Sigmoid colon (tissue), 7 donors: ENCODE measurements at regions of chr2 and their contacts with region 1.

Region 1: DNA sequence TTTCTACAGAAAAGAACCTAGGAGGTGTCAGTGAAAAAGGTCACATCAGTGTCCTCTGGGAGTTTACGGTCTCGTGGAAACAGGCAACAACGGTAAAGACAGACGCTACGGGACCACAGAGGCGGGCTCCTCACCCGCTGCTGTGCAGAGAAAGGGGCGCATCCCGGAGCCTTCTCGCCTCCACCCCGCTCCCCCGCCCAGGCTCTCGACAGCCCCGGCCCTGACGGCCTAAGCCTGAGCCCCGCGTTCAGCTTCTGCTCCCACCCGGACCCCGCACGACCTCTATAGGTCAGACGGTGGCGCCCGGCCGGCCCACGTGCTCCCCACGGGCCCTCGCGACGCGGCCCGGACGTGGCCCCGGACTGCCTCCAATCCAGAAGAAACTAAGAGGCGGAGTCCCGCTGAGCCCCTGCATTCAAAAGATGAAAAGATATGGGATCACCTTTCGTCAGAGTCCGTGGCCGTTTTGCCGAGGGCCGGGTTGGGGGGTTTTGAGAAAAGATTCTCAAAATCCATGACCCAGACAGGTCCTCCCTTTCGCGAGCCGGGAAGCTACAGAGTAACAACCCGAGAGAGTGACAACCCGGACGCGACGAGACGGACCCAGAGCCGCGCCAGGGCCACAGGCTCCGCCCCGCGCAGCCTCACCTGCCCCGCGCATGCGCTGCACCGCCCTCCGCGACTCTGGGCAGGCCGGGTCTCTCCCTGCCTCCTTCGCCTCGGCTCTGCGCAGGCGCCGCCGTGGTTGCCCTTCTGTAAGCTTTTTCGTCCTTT is at the start of gene ZC3H8:
- DNase-seq: peak; percentile 96
- H3K4me3 ChIP-seq: peak within 1 kb of the TSS; percentile 57 to 81 (median 66)
- H3K27ac ChIP-seq: peak within 1 kb of the TSS; percentile 80 to 85 (median 81)
- H3K4me1 ChIP-seq: peaks cover 0 to 15% (median 11%) of the 10 kb centered on the region in 4 donors
- H3K27me3 ChIP-seq: no peaks in the 10 kb centered on the region
- CTCF ChIP-seq: no peak
- EP300 ChIP-seq: no peak
- POLR2A ChIP-seq: peak; percentile 59 to 60
- total RNA-seq, gene ZC3H8: 2.7 to 22.2 (median 7.4) TPM

Region 2: DNA sequence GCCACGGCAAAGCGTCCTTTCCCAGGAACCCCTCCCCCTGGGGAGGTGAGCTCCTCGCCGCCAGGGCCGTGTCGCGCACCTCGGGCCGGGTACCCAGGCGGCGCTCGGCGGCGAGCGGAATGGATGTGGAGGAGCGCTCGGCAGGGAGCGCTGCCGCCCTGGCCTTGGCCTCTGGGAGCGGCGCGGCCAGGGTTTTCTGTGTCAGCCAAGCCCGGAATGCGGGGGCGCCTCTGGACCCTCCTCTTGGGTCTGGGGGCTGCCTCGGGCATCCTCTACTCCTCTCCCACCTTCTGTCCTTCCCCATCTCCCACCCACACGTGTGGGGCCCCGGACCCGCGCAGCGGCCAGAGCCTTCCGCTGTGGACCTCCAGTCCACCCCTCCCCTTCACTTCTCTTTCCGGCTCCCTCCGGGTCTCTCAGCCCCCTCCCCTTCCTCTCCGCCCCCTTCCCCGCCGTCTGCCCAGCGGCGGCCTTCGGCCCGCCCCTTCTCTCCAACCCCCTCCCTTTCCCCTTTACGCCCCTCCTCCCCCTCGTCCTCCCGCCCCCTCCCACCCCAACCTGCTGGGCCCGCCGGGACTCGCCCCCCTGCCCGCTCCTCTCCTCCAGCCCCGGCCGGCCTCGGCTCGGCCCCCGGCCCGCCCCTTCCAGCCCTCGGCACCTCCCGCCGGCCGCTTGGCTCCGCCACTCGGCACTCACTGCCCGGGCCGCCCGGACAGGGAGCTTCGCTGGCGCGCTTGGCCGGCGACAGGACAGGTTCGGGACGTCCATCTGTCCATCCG is 356.5 kb before region 1 on chr2 and contains the start of gene MERTK:
- intact Hi-C with region 1: loop called (anchors 10 kb)
- DNase-seq: peak; percentile 95
- H3K4me3 ChIP-seq: peak within 1 kb of the TSS; percentile 70 to 80 (median 75)
- H3K27ac ChIP-seq: peak within 1 kb of the TSS; percentile 80 to 90 (median 88)
- H3K4me1 ChIP-seq: peaks cover 0 to 37% (median 23%) of the 10 kb centered on the region in 4 donors
- H3K27me3 ChIP-seq: no peaks in the 10 kb centered on the region
- CTCF ChIP-seq: peak; percentile 43 to 49 (median 46)
- EP300 ChIP-seq: no peak
- POLR2A ChIP-seq: peak in 1 of 2 donors; percentile 42
- total RNA-seq, gene MERTK: 14.4 to 31.6 (median 26.0) TPM

Region 3: GRCh38 chr2:112138159-112138773 is 116.4 kb before region 1 on chr2 and contains the start of gene FBLN7:
- intact Hi-C with region 1: no loop called
- DNase-seq: no peak
- H3K4me3 ChIP-seq: peak within 1 kb of the TSS in 3 of 4 donors; percentile 48 to 55 (median 53)
- H3K27ac ChIP-seq: no peak within 1 kb of the TSS
- H3K4me1 ChIP-seq: peaks cover 0 to 13% (median 7%) of the 10 kb centered on the region in 4 donors
- H3K27me3 ChIP-seq: peaks cover 7 to 35% (median 11%) of the 10 kb centered on the region in 3 donors
- CTCF ChIP-seq: no peak
- EP300 ChIP-seq: no peak
- POLR2A ChIP-seq: no peak
- total RNA-seq, gene FBLN7: 0.95 to 1.7 (median 1.0) TPM

Region 4: GRCh38 chr2:112187805-112188596 is 66.7 kb before region 1 on chr2:
- intact Hi-C with region 1: no loop called
- DNase-seq: no peak
- H3K4me3 ChIP-seq: no peak overlapping the region
- H3K27ac ChIP-seq: no peak overlapping the region
- H3K4me1 ChIP-seq: no peaks in the 10 kb centered on the region
- H3K27me3 ChIP-seq: peaks cover 0 to under 1% (median 0%) of the 10 kb centered on the region in 3 donors
- CTCF ChIP-seq: no peak
- EP300 ChIP-seq: no peak
- POLR2A ChIP-seq: no peak

Region 5: DNA sequence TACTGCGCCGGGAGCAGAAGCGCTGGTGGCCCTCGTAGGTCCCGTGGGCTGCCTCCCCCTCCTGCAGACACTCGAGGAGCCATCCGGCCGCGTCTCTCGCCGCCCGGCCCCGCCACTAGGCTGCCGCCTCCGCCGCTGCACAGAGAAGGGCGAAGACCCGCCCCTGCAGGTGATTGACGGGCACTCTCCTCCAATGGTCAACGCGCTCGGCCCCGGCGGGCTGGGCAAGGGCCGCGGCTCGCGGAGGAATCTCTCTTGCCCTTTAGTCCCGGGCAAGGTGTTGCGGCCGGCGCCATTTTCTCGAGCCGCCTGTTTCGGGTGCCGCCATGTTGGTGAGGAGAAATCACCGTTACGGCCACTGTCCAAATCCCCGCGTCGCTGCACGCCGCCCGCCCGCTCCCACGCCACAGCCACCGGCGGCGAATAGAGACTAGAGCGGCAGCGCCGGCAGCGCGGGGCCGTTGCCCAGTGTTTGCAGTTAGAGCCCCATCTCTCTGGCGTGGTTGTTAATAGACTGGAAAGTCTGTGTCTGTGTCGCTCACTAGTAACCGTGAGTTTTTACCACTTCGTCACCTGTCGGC is 20.7 kb after region 1 on chr2 and contains the start of gene ZC3H6:
- intact Hi-C with region 1: loop called (anchors 1 kb)
- DNase-seq: peak; percentile 99
- H3K4me3 ChIP-seq: peak within 1 kb of the TSS; percentile 68 to 97 (median 89)
- H3K27ac ChIP-seq: peak within 1 kb of the TSS; percentile 95 to 100 (median 99)
- H3K4me1 ChIP-seq: peaks cover 0 to 14% (median 6%) of the 10 kb centered on the region in 4 donors
- H3K27me3 ChIP-seq: no peaks in the 10 kb centered on the region
- CTCF ChIP-seq: peak in 1 of 4 experiments; percentile 36
- EP300 ChIP-seq: peak in 1 of 4 donors; percentile 13
- POLR2A ChIP-seq: peak; percentile 91 to 94
- total RNA-seq, gene ZC3H6: 13.2 to 27.1 (median 16.5) TPM

Region 6: DNA sequence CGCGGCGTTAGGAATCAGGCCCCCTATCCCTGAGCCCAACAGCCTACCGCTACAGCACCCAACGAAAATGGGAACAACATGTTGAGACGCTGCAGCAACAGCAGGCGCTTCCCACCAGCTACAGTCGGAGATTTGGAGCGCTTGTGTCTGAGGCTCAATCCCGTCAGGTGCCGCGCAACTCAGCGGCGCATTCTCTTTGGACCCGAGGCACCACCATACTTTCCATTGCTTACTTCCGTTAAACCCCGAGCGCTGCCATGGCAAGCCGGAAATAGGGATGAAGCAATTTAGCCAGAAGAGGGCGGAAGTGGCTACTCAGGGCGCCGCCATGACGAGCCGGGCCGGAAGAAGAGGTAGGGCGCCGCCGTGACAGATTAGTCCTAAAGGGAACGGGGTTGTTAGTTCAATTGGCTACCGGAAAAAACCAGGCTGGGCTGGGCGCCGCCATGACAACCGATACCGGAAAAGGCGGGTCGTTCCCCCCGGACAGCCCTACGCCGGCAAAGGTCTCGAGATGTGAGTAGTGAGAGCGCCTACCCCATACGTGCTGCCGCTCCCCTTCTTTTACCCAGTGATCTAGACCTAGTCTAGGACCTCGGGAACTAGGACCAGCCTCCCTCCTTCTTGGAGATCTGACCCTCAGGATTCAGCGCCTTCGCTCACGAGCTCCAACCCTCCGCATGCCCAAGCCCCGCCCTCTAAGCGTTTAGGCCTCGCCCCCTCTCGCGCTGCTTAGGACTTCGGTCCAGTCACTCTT is 329.7 kb after region 1 on chr2 and contains the start of gene CHCHD5:
- intact Hi-C with region 1: loop called (anchors 5 kb)
- DNase-seq: peak; percentile 98
- H3K4me3 ChIP-seq: peak within 1 kb of the TSS; percentile 62 to 69 (median 66)
- H3K27ac ChIP-seq: peak within 1 kb of the TSS; percentile 85 to 94 (median 93)
- H3K4me1 ChIP-seq: peaks cover 0 to 25% (median 18%) of the 10 kb centered on the region in 4 donors
- H3K27me3 ChIP-seq: no peaks in the 10 kb centered on the region
- CTCF ChIP-seq: peak in 2 of 4 experiments; percentile 17 to 27
- EP300 ChIP-seq: peak in 2 of 4 donors; percentile 15 to 16
- POLR2A ChIP-seq: peak; percentile 18 to 36
- total RNA-seq, gene CHCHD5: 13.8 to 36.4 (median 25.3) TPM